Activated CD8-positive, alpha-beta T cell treated with anti-CD3 and anti-CD28 coated beads, Interleukin-2, amount 10 ng/mL, durations not matched to agents 7 days and 5 days (primary cell): ENCODE measurements at regions of chr2 and their contacts with region 1.

Region 1: GRCh38 chr2:94986392-94986963 is 39.0 kb upstream of the MAL start:
- DNase-seq: peak; percentile 67
- ATAC-seq: peak; percentile 79
- H3K4me3 Mint-ChIP-seq: no peak overlapping the region
- H3K27ac Mint-ChIP-seq: no peak overlapping the region
- H3K4me1 Mint-ChIP-seq: peaks cover 6% of the 10 kb centered on the region
- H3K27me3 Mint-ChIP-seq: peaks cover 10% of the 10 kb centered on the region

Region 2: GRCh38 chr2:94947097-94948016 is 39.1 kb before region 1 on chr2:
- CTCF ChIA-PET with region 1: no interaction called
- POLR2A ChIA-PET with region 1: no interaction called
- DNase-seq: no peak
- ATAC-seq: no peak
- H3K4me3 Mint-ChIP-seq: no peak overlapping the region
- H3K27ac Mint-ChIP-seq: no peak overlapping the region
- H3K4me1 Mint-ChIP-seq: no peaks in the 10 kb centered on the region
- H3K27me3 Mint-ChIP-seq: peaks cover 5% of the 10 kb centered on the region

Region 3: GRCh38 chr2:94996305-94997100 is 10.0 kb after region 1 on chr2:
- CTCF ChIA-PET with region 1: interaction called, 12 read pairs
- POLR2A ChIA-PET with region 1: no interaction called
- DNase-seq: no peak
- ATAC-seq: no peak
- H3K4me3 Mint-ChIP-seq: no peak overlapping the region
- H3K27ac Mint-ChIP-seq: no peak overlapping the region
- H3K4me1 Mint-ChIP-seq: no peaks in the 10 kb centered on the region
- H3K27me3 Mint-ChIP-seq: peaks cover 18% of the 10 kb centered on the region